Left lung (tissue), 14 donors: ENCODE measurements at regions of chr6 and their contacts with region 1.

Region 1: DNA sequence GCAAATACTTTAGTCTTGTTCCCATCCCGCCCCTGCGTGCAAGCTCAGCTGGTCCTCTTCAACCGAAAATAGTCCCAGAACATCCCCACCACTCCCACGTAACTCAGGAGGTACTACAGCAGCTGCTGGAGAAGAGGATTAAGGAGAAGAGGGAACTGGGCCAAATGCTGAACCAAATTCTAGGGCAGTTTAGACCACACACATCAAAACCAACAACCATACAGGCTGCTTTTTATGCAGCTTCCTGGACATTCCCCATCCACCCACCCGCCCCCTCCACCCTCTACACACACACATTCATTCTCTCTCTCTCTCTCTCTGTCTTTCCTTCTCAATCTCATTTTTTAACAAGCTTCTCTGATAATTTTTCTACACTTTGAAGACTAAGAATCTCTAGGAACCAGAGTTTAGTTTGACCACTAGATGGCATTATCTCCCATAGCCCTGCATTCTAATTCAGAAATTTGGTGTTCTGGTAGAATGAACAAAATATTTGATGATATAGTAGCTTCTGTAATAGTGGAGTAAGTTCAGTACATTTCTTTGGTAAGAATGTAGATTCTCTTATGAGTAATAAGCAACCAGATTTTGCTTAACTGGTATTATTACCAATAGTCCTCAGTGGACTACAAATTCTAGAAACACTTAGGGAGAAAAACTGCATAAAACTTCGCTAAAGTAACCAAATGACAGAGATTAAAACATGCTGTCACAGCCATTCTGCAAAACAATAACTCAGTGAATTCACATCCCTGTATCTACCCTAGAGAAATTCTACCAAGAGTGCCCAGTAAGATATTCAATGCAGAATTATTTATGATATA is 52.1 kb upstream of the BEND6 start:
- DNase-seq: peak in 2 of 4 donors; percentile 30 to 41
- ATAC-seq: peak; percentile 57
- H3K4me3 ChIP-seq: no peak overlapping the region
- H3K27ac ChIP-seq: no peak overlapping the region
- H3K4me1 ChIP-seq: no peaks in the 10 kb centered on the region
- H3K27me3 ChIP-seq: no peaks in the 10 kb centered on the region
- CTCF ChIP-seq: peak; percentile 49 to 55

Region 2: DNA sequence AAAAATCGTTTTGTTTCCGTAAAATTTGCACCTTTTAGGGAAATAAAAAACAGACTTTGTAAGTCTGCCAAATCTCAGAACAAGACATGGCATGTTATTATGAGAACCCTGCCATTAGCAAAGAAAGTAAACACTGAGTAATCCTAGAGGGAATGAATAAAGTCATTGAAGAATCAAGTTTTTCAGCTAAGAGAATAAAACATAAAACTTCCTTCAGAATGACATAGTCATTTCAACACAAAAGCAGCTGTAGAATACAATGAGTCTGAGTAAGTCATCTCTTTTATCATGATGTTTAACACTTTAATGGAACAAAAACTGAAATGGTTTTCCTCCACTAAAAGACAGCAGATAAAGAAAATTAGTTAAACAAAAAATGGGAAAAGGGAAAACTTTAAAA is 249.9 kb before region 1 on chr6:
- intact Hi-C with region 1: no loop called
- DNase-seq: no peak
- ATAC-seq: peak; percentile 77
- H3K4me3 ChIP-seq: no peak overlapping the region
- H3K27ac ChIP-seq: peak overlapping the region in 1 of 2 donors; percentile 27
- H3K4me1 ChIP-seq: peaks cover 10 to 26% of the 10 kb centered on the region in 2 donors
- H3K27me3 ChIP-seq: no peaks in the 10 kb centered on the region
- CTCF ChIP-seq: no peak

Region 3: DNA sequence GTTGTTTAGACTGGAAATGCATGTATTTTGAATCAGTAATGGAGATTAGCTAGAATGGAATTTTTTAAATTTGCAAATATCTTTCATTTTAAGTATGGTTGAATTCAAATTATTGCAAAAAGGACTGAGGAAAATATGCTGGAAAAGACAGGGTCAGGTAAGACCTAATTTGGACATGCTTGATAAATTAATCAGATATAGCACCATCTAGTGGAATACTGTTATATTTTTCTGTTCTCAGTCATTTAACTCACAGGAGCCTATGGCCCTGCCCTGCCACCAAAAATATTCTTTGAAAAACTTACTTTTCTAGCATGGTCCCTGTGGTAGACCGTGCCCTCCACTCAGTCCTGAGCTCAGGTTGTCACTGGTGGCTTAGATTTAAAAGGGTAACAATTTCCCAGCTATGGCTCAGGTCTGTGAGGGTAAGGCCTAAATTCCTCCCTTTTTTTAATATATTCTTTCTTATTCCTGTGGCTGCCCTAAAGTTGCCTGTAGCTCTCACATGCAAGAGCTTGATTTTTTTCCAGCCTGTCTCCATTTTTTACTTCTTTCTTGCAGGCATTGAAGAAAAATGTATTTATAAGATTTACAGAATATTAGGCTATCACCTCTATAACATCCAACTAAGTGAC is 118.3 kb after region 1 on chr6:
- intact Hi-C with region 1: loop called in 1 of 2 experiments (anchors 10 kb)
- DNase-seq: peak in 2 of 4 donors; percentile 17 to 21
- ATAC-seq: peak; percentile 87
- H3K4me3 ChIP-seq: no peak overlapping the region
- H3K27ac ChIP-seq: no peak overlapping the region
- H3K4me1 ChIP-seq: no peaks in the 10 kb centered on the region
- H3K27me3 ChIP-seq: no peaks in the 10 kb centered on the region
- CTCF ChIP-seq: peak; percentile 27 to 54

Region 4: DNA sequence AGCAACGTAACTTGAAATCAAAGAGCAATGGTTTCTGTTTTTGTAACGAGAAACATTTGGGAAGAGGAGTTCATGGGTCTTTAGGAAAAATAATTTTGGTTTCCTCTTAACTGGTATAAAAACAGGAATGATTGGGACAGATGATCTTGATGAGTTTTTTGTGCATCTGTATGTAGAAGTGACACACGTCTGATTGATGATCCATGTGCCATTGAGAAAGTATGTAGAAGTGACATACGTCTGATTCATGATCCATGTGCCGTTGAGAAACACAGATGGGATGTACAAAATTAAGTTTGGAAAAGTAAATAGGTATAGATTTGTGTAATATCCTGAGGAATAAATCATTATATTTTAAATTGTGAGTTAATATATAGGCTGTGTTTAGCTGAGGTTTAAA is 145.7 kb after region 1 on chr6:
- intact Hi-C with region 1: no loop called
- DNase-seq: no peak
- ATAC-seq: no peak
- H3K4me3 ChIP-seq: no peak overlapping the region
- H3K27ac ChIP-seq: no peak overlapping the region
- H3K4me1 ChIP-seq: peaks cover 0 to 15% of the 10 kb centered on the region in 2 donors
- H3K27me3 ChIP-seq: no peaks in the 10 kb centered on the region
- CTCF ChIP-seq: no peak

Region 5: DNA sequence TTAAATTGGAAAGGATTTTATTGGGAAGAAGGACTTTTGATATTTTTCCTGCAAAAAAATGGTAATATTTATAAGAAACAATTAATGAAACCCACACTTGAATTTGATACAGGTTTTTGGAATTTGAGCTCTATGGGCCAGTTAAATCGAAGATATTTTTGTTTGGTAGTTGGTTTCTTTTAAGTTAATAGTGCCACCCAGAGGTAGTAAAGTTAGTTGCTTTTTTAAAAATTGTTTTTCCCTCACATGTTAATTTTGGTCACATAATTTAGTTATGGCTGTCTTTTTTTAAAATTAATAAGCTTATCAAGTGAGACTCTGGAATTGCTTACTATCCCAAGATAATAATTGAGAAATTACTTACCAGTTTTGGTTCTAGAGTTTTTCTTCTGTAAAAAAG is 421.7 kb after region 1 on chr6:
- intact Hi-C with region 1: loop called in 1 of 2 experiments (anchors 10 kb)
- DNase-seq: no peak
- ATAC-seq: no peak
- H3K4me3 ChIP-seq: no peak overlapping the region
- H3K27ac ChIP-seq: no peak overlapping the region
- H3K4me1 ChIP-seq: no peaks in the 10 kb centered on the region
- H3K27me3 ChIP-seq: no peaks in the 10 kb centered on the region
- CTCF ChIP-seq: no peak